Heart left ventricle (tissue), 16 donors: ENCODE measurements at regions of chr18 and their contacts with region 1.

Region 1: GRCh38 chr18:22694954-22695353 is 238.2 kb upstream of the RBBP8 start:
- DNase-seq: peak in 4 of 5 donors; percentile 22 to 70 (median 44)
- ATAC-seq: peak in 3 of 4 donors; percentile 56 to 86 (median 59)
- H3K4me3 ChIP-seq: peak overlapping the region in 1 of 12 donors; percentile 3
- H3K27ac ChIP-seq: no peak overlapping the region
- H3K4me1 ChIP-seq: no peaks in the 10 kb centered on the region
- H3K27me3 ChIP-seq: no peaks in the 10 kb centered on the region
- CTCF ChIP-seq: no peak
- POLR2A ChIP-seq: no peak

Region 2: GRCh38 chr18:21672521-21673267 is 1022.3 kb before region 1 on chr18:
- intact Hi-C with region 1: no loop called
- DNase-seq: peak in 4 of 5 donors; percentile 23 to 69 (median 34)
- ATAC-seq: peak; percentile 77 to 95 (median 88)
- H3K4me3 ChIP-seq: no peak overlapping the region
- H3K27ac ChIP-seq: peak overlapping the region in 8 of 12 donors; percentile 10 to 60 (median 52)
- H3K4me1 ChIP-seq: peaks cover 0 to 10% (median 0%) of the 10 kb centered on the region in 12 donors
- H3K27me3 ChIP-seq: no peaks in the 10 kb centered on the region
- CTCF ChIP-seq: peak in 1 of 12 donors; percentile 8
- POLR2A ChIP-seq: no peak

Region 3: DNA sequence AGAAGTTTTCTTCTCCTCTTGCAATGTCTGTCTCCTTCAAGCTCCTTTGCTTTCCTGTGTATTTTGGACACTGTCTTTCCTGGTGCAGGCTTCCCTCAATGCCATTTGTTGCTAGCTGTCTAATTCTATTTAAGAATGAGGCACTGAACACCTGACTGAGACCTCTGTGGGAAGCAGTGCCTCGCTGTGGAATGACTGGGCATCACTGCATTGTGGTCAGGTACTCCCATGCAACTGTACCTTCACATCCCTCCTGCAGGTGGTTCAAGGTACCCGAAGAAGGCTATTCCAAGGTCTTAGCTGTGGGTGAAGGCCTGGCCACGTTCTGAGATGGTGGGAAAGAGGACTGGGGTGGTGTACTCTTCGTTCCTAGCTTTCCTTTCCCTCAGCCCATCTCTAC is 124.5 kb before region 1 on chr18:
- intact Hi-C with region 1: loop called in 3 of 10 experiments (anchors 10 kb)
- DNase-seq: no peak
- ATAC-seq: no peak
- H3K4me3 ChIP-seq: no peak overlapping the region
- H3K27ac ChIP-seq: no peak overlapping the region
- H3K4me1 ChIP-seq: peaks cover 0 to 4% (median 0%) of the 10 kb centered on the region in 12 donors
- H3K27me3 ChIP-seq: no peaks in the 10 kb centered on the region
- CTCF ChIP-seq: no peak
- POLR2A ChIP-seq: no peak

Region 4: DNA sequence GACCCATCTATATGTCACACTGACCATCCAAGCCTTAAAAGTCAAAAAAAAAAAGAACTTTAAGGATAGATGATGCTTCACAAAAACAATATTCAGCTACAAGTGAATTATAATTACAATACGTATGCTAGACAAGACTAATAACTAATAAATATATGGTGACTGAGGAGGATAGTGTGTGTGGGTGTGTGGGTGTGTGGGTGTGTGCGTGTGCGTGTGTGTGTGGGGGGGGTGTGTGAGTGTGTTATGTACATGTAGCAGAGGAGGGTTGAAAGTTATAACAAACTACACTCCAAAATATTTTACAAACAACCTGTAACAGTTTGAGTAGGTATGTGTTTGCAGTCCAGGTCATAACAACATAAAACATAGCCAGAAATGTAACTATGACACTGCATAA is 79.0 kb after region 1 on chr18:
- intact Hi-C with region 1: no loop called
- DNase-seq: no peak
- ATAC-seq: no peak
- H3K4me3 ChIP-seq: no peak overlapping the region
- H3K27ac ChIP-seq: no peak overlapping the region
- H3K4me1 ChIP-seq: peaks cover 0 to 10% (median 6%) of the 10 kb centered on the region in 12 donors
- H3K27me3 ChIP-seq: no peaks in the 10 kb centered on the region
- CTCF ChIP-seq: no peak
- POLR2A ChIP-seq: no peak